HepG2 (cell line): ENCODE measurements at regions of chr22 and their contacts with region 1.

Region 1: GRCh38 chr22:38843201-38843715 is 570 bp downstream of the NPTXR start:
- DNase-seq: peak; percentile 39
- ATAC-seq: peak; percentile 77
- H3K4me3 ChIP-seq: peak overlapping the region; percentile 39 to 83 (median 45)
- H3K27ac ChIP-seq: peak overlapping the region; percentile 9
- H3K4me1 ChIP-seq: peaks cover 78% of the 10 kb centered on the region
- H3K27me3 ChIP-seq: peaks cover 0 to 10% of the 10 kb centered on the region in 2 experiments; a peak in 3 of 5 replicates
- CTCF ChIP-seq: peak; percentile 47; the same call in 1 of the 2 replicates
- EP300 ChIP-seq: no peak
- POLR2A ChIP-seq: no peak
- RAD21 ChIP-seq: peak; percentile 82

Region 2: GRCh38 chr22:38766076-38766777 is 77.0 kb before region 1 on chr22:
- CTCF ChIA-PET with region 1: interaction called, 9 read pairs
- POLR2A ChIA-PET with region 1: interaction called, 3 read pairs
- in situ Hi-C with region 1: no loop called
- intact Hi-C with region 1: loop called (anchors 10 kb)
- DNase-seq: peak; percentile 74
- ATAC-seq: peak; percentile 89
- H3K4me3 ChIP-seq: no peak overlapping the region
- H3K27ac ChIP-seq: no peak overlapping the region
- H3K4me1 ChIP-seq: peaks cover 40% of the 10 kb centered on the region
- H3K27me3 ChIP-seq: peaks cover 2 to 33% of the 10 kb centered on the region in 2 experiments; a peak in 4 of 5 replicates
- CTCF ChIP-seq: peak; percentile 93
- EP300 ChIP-seq: no peak
- POLR2A ChIP-seq: no peak
- RAD21 ChIP-seq: peak; percentile 73